Naive thymus-derived CD4-positive, alpha-beta T cell (primary cell): ENCODE measurements at regions of chrX and their contacts with region 1.

Region 1: DNA sequence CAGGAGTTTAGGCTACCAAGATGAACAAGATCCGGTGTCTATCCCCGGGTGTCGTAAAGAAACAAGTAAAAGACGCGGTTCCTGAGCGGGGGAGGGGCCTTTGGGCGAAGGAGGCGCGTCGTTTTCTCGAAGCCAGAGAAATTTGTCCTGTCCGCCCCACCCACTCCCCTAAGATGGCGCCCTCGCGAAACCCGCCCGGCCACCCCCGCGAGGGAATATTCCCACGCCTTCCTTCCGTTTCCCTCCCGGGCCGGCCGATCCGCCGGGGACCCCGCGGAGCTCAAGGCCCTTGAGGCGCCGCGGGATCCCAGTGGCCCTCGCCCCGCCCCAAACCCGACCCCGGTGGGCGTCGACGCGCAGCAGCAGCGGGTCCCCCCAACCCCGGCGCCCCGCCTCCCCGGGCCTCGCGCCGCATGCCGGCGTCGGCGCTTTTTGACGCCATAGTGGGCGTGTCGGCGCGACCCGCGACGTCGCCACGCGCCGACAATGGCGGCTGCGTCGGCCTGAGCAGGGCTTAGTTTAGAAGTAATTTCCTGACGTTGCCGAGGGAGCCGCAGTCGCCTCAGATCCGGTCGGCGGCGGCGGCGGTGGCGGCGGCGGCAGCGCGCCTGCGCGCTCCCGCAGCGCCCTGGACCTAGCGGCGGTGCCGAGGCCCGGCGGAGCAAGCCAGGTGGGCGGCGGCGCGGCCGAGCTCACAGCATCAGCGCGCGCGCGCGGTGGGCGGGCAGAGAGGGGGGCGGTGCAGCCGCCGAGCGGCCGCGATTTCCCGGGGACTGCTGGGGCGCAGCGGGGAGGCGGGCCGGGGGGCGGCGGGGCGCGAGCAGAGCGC is at the start of gene HTATSF1:
- DNase-seq: peak; percentile 72 to 92 (median 88)
- ATAC-seq: peak; percentile 89
- H3K4me3 ChIP-seq: peak within 1 kb of the TSS; percentile 69
- H3K4me3 Mint-ChIP-seq: peak within 1 kb of the TSS; percentile 84 to 97 (median 94)
- H3K27ac ChIP-seq: peak within 1 kb of the TSS; percentile 86
- H3K27ac Mint-ChIP-seq: peak within 1 kb of the TSS; percentile 93 to 99 (median 97)
- H3K4me1 ChIP-seq: peaks cover 7 to 10% of the 10 kb centered on the region in 2 donors
- H3K4me1 Mint-ChIP-seq: peaks cover 6 to 24% (median 17%) of the 10 kb centered on the region in 7 donors
- H3K27me3 ChIP-seq: no peaks in the 10 kb centered on the region
- H3K27me3 Mint-ChIP-seq: peaks cover 0 to 5% (median 0%) of the 10 kb centered on the region in 5 donors
- total RNA-seq, gene HTATSF1: 25.9 to 67.2 (median 29.0) TPM

Region 2: DNA sequence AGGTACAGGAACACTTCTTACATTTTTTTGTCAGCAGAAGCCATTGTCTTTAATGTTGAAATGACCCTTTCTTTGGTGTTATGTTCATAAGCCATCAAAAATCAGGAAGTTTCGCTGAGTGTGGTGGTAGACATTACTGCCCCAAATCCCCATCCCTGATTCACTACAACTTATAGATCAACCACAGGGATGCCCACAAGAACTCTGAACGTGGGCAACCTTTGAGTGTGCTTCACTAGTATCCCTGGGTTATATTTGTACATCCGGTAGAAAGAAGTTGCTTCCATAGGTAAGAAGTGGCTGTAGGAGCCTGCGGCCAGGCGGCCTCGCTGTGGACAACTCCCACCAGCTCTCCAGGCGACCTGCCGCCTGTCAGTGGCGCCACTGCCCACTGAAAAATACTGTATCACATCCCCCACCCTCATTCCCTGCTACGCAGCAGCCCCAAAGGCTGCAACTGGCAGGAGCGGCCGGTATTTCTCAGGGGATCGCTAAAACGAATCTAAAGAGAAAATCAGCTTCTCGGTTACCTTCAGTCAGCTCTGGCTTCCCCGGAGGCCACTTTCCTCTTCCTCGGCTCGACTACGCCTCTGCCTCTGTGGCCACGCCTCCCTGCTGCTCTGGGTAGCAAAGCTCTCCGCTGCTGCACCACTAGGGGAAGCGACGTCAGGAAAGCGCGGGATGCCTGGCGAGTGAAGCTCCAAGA is 1201.6 kb before region 1 on chrX:
- CTCF ChIA-PET with region 1: no interaction called
- POLR2A ChIA-PET with region 1: no interaction called
- intact Hi-C with region 1: loop called in 1 of 2 experiments (anchors 10 kb)
- DNase-seq: peak; percentile 26 to 69 (median 58)
- ATAC-seq: peak; percentile 98
- H3K4me3 ChIP-seq: peak overlapping the region; percentile 63
- H3K4me3 Mint-ChIP-seq: peak overlapping the region; percentile 85 to 95 (median 92)
- H3K27ac ChIP-seq: peak overlapping the region; percentile 67
- H3K27ac Mint-ChIP-seq: peak overlapping the region; percentile 76 to 94 (median 90)
- H3K4me1 ChIP-seq: peaks cover 5 to 9% of the 10 kb centered on the region in 2 donors
- H3K4me1 Mint-ChIP-seq: peaks cover 0 to 32% (median 23%) of the 10 kb centered on the region in 7 donors
- H3K27me3 ChIP-seq: no peaks in the 10 kb centered on the region
- H3K27me3 Mint-ChIP-seq: no peaks in the 10 kb centered on the region

Region 3: DNA sequence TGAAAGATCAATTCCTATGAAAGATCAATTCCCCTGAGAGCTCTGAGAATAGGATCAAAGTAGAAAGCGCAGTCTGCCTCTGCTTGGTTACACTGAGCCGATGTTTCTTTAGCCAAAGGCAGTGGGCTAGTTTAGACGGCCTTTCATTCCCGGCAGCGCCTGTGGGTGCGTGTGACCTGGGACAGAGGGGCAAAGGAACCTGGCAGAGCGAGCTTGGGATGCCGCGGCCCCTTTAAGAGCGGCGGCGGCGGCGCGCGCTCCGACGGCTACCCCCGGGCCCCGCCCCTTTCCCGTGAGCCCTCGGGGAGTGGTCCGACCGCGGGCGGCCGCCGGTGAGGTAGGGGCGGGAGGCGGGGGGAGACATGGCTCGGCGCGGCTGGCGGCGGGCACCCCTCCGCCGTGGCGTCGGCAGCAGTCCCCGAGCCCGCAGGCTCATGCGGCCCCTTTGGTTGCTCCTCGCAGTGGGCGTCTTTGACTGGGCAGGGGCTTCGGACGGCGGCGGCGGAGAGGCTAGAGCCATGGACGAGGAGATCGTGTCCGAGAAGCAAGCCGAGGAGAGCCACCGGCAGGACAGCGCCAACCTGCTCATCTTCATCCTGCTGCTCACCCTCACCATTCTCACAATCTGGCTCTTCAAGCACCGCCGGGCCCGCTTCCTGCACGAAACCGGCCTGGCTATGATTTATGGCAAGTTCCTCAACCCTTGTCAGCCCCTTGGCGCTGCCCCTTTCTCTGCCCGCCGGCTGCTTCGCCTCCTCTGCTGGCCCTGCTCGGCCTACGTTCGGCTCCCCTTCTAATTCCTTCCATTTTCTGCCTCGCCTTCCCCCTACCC is 511.6 kb before region 1 on chrX and contains the start of gene SLC9A6:
- CTCF ChIA-PET with region 1: no interaction called
- POLR2A ChIA-PET with region 1: no interaction called
- intact Hi-C with region 1: loop called (anchors 5 kb)
- DNase-seq: peak; percentile 26 to 75 (median 52)
- ATAC-seq: peak; percentile 96
- H3K4me3 ChIP-seq: peak within 1 kb of the TSS; percentile 73
- H3K4me3 Mint-ChIP-seq: peak within 1 kb of the TSS; percentile 79 to 95 (median 92)
- H3K27ac ChIP-seq: peak within 1 kb of the TSS; percentile 76
- H3K27ac Mint-ChIP-seq: peak within 1 kb of the TSS; percentile 80 to 99 (median 93)
- H3K4me1 ChIP-seq: peaks cover 20 to 23% of the 10 kb centered on the region in 2 donors
- H3K4me1 Mint-ChIP-seq: peaks cover 40 to 78% (median 61%) of the 10 kb centered on the region in 7 donors
- H3K27me3 ChIP-seq: no peaks in the 10 kb centered on the region
- H3K27me3 Mint-ChIP-seq: no peaks in the 10 kb centered on the region
- total RNA-seq, gene SLC9A6: 16.2 to 21.1 (median 18.9) TPM

Region 4: GRCh38 chrX:136387951-136388502 is 109.0 kb before region 1 on chrX:
- CTCF ChIA-PET with region 1: no interaction called
- POLR2A ChIA-PET with region 1: no interaction called
- intact Hi-C with region 1: no loop called
- DNase-seq: no peak
- ATAC-seq: no peak
- H3K4me3 ChIP-seq: no peak overlapping the region
- H3K4me3 Mint-ChIP-seq: no peak overlapping the region
- H3K27ac ChIP-seq: no peak overlapping the region
- H3K27ac Mint-ChIP-seq: no peak overlapping the region
- H3K4me1 ChIP-seq: no peaks in the 10 kb centered on the region
- H3K4me1 Mint-ChIP-seq: peaks cover 0 to 2% (median 0%) of the 10 kb centered on the region in 7 donors
- H3K27me3 ChIP-seq: no peaks in the 10 kb centered on the region
- H3K27me3 Mint-ChIP-seq: peaks cover 0 to 18% (median 13%) of the 10 kb centered on the region in 5 donors

Region 5: DNA sequence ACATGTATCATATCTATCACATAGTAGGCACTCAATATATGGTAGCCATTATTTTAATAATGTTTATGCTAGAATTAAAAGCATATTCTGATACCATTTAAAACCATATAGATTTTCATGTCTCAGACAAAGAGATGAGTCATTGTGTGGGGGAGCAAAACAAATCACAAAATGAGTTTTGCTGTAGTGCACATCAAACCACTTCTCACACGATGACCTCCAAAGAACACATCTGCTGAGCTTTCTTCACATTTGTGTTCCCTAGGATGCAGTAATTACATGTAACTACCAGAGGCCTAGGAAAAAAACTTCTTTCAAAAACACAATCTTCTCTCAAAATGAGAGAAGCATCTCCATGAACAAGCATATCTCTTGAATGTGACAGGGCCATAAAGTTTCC is 65.4 kb before region 1 on chrX:
- CTCF ChIA-PET with region 1: no interaction called
- POLR2A ChIA-PET with region 1: no interaction called
- intact Hi-C with region 1: no loop called
- DNase-seq: no peak
- ATAC-seq: no peak
- H3K4me3 ChIP-seq: no peak overlapping the region
- H3K4me3 Mint-ChIP-seq: no peak overlapping the region
- H3K27ac ChIP-seq: no peak overlapping the region
- H3K27ac Mint-ChIP-seq: no peak overlapping the region
- H3K4me1 ChIP-seq: no peaks in the 10 kb centered on the region
- H3K4me1 Mint-ChIP-seq: peaks cover 0 to 8% (median 0%) of the 10 kb centered on the region in 7 donors
- H3K27me3 ChIP-seq: no peaks in the 10 kb centered on the region
- H3K27me3 Mint-ChIP-seq: no peaks in the 10 kb centered on the region

Region 6: DNA sequence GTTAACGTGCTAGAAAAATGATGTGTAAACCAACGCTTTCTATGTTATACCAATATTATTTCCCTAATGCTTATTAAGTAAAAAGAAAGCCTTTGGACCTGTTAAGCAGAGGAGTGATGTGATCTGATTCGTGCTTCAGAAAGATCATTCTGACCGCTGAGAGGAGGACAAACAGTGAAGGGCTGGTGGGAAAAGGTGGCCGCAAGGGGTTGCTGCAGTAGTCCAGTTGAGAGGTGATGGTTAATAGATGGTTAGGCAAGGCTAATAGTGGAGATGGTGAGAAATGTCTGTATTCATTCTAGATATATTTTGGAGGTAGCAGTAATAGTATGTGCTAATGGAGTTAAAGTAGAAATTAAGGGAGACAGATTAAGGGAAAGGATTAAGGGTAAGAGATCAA is 22.1 kb after region 1 on chrX:
- CTCF ChIA-PET with region 1: no interaction called
- POLR2A ChIA-PET with region 1: no interaction called
- intact Hi-C with region 1: loop called in 1 of 2 experiments (anchors 2 kb)
- DNase-seq: no peak
- ATAC-seq: no peak
- H3K4me3 ChIP-seq: no peak overlapping the region
- H3K4me3 Mint-ChIP-seq: no peak overlapping the region
- H3K27ac ChIP-seq: no peak overlapping the region
- H3K27ac Mint-ChIP-seq: no peak overlapping the region
- H3K4me1 ChIP-seq: no peaks in the 10 kb centered on the region
- H3K4me1 Mint-ChIP-seq: peaks cover 0 to 13% (median 8%) of the 10 kb centered on the region in 7 donors
- H3K27me3 ChIP-seq: no peaks in the 10 kb centered on the region
- H3K27me3 Mint-ChIP-seq: no peaks in the 10 kb centered on the region

Region 7: GRCh38 chrX:136694431-136695087 is 197.6 kb after region 1 on chrX:
- CTCF ChIA-PET with region 1: no interaction called
- POLR2A ChIA-PET with region 1: no interaction called
- intact Hi-C with region 1: loop called (anchors 1 to 2 kb)
- DNase-seq: peak in 7 of 9 donors; percentile 54 to 72 (median 64)
- ATAC-seq: peak; percentile 83
- H3K4me3 ChIP-seq: peak overlapping the region; percentile 40
- H3K4me3 Mint-ChIP-seq: peak overlapping the region; percentile 69 to 85 (median 80)
- H3K27ac ChIP-seq: peak overlapping the region; percentile 81
- H3K27ac Mint-ChIP-seq: peak overlapping the region; percentile 93 to 99 (median 97)
- H3K4me1 ChIP-seq: peaks cover 54 to 59% of the 10 kb centered on the region in 2 donors
- H3K4me1 Mint-ChIP-seq: peaks cover 21 to 83% (median 64%) of the 10 kb centered on the region in 7 donors
- H3K27me3 ChIP-seq: no peaks in the 10 kb centered on the region
- H3K27me3 Mint-ChIP-seq: no peaks in the 10 kb centered on the region

Region 8: GRCh38 chrX:136909706-136910564 is 413.0 kb after region 1 on chrX:
- CTCF ChIA-PET with region 1: no interaction called
- POLR2A ChIA-PET with region 1: interaction called, 4 read pairs
- intact Hi-C with region 1: loop called (anchors 1 kb)
- DNase-seq: peak; percentile 10 to 59 (median 39)
- ATAC-seq: peak; percentile 75
- H3K4me3 ChIP-seq: peak overlapping the region; percentile 84
- H3K4me3 Mint-ChIP-seq: peak overlapping the region; percentile 87 to 97 (median 96)
- H3K27ac ChIP-seq: peak overlapping the region; percentile 89
- H3K27ac Mint-ChIP-seq: peak overlapping the region; percentile 75 to 97 (median 91)
- H3K4me1 ChIP-seq: peaks cover 0 to 7% of the 10 kb centered on the region in 2 donors
- H3K4me1 Mint-ChIP-seq: peaks cover 0 to 22% (median 11%) of the 10 kb centered on the region in 7 donors
- H3K27me3 ChIP-seq: no peaks in the 10 kb centered on the region
- H3K27me3 Mint-ChIP-seq: no peaks in the 10 kb centered on the region

Region 9: GRCh38 chrX:137695417-137695816 is 1198.4 kb after region 1 on chrX:
- CTCF ChIA-PET with region 1: no interaction called
- POLR2A ChIA-PET with region 1: no interaction called
- intact Hi-C with region 1: no loop called
- DNase-seq: no peak
- ATAC-seq: no peak
- H3K4me3 ChIP-seq: no peak overlapping the region
- H3K4me3 Mint-ChIP-seq: no peak overlapping the region
- H3K27ac ChIP-seq: no peak overlapping the region
- H3K27ac Mint-ChIP-seq: no peak overlapping the region
- H3K4me1 ChIP-seq: no peaks in the 10 kb centered on the region
- H3K4me1 Mint-ChIP-seq: no peaks in the 10 kb centered on the region
- H3K27me3 ChIP-seq: no peaks in the 10 kb centered on the region
- H3K27me3 Mint-ChIP-seq: no peaks in the 10 kb centered on the region